ENCODE measurements at regions of chr7 and their contacts with region 1.

Region 1: GRCh38 chr7:66125052-66125708 is 10.5 kb downstream of the CRCP start:
- DNase-seq: no peak
- ATAC-seq: no peak
- H3K4me3 ChIP-seq: no peak overlapping the region
- H3K27ac ChIP-seq: no peak overlapping the region
- H3K4me1 ChIP-seq: peaks cover 15% of the 10 kb centered on the region
- H3K27me3 ChIP-seq: no peaks in the 10 kb centered on the region
- CTCF ChIP-seq: no peak

Region 2: DNA sequence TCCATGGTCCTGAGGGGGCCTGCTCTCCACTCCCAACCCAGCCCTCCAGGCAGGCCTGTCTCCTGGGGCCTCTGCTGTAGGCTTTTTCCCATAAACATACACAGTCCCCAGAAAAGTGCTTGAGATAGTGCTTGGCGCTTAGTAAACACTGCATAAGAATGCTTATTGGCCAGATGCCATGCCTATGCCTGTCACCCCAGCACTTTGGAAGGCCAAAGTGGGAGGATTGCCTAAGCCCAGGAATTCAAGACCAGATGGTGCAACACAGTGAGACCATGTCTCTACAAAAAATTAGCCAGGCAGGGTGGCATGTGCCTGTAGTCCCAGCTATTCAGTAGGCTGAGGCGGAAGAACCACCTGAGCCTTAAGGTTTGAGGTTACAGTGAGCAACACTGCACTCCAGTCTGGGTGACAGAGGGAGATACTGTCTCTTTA is 74.2 kb before region 1 on chr7:
- CTCF ChIA-PET with region 1: no interaction called
- POLR2A ChIA-PET with region 1: no interaction called
- in situ Hi-C with region 1: no loop called
- intact Hi-C with region 1: no loop called
- DNase-seq: no peak
- ATAC-seq: no peak
- H3K4me3 ChIP-seq: no peak overlapping the region
- H3K27ac ChIP-seq: no peak overlapping the region
- H3K4me1 ChIP-seq: no peaks in the 10 kb centered on the region
- H3K27me3 ChIP-seq: no peaks in the 10 kb centered on the region
- CTCF ChIP-seq: no peak

Region 3: GRCh38 chr7:66376264-66376945 is 251.2 kb after region 1 on chr7:
- CTCF ChIA-PET with region 1: no interaction called
- POLR2A ChIA-PET with region 1: interaction called, 13 read pairs
- in situ Hi-C with region 1: no loop called
- intact Hi-C with region 1: no loop called
- DNase-seq: no peak
- ATAC-seq: no peak
- H3K4me3 ChIP-seq: no peak overlapping the region
- H3K27ac ChIP-seq: no peak overlapping the region
- H3K4me1 ChIP-seq: no peaks in the 10 kb centered on the region
- H3K27me3 ChIP-seq: no peaks in the 10 kb centered on the region
- CTCF ChIP-seq: no peak

Measured in Panc1 (cell line).